GM12878 (cell line): ENCODE measurements at regions of chr6 and their contacts with region 1.

Region 1: GRCh38 chr6:16494793-16495192 is 256.4 kb downstream of the GMPR start:
- DNase-seq: peak; percentile 90
- ATAC-seq: peak; percentile 75
- H3K4me3 ChIP-seq: peak overlapping the region; percentile 3; the same call in 1 of the 2 replicates
- H3K27ac ChIP-seq: peak overlapping the region; percentile 85
- H3K4me1 ChIP-seq: peaks cover 60% of the 10 kb centered on the region
- H3K27me3 ChIP-seq: no peaks in the 10 kb centered on the region
- CTCF ChIP-seq: no peak
- EP300 ChIP-seq: peak in 1 of 2 experiments; percentile 87; a peak in 3 of 4 replicates
- POLR2A ChIP-seq: no peak
- RAD21 ChIP-seq: no peak

Region 2: GRCh38 chr6:16481697-16482399 is 12.9 kb before region 1 on chr6:
- CTCF ChIA-PET with region 1: interaction called, 155 read pairs
- POLR2A ChIA-PET with region 1: interaction called, 256 read pairs
- RAD21 ChIA-PET with region 1: interaction called, 66 read pairs
- SMC1A ChIA-PET with region 1: interaction called, 388 read pairs
- in situ Hi-C with region 1: no loop called
- intact Hi-C with region 1: loop called (anchors 1 kb)
- DNase-seq: no peak
- ATAC-seq: peak; percentile 61
- H3K4me3 ChIP-seq: peak overlapping the region; percentile 20; the same call in 1 of the 2 replicates
- H3K27ac ChIP-seq: peak overlapping the region; percentile 83
- H3K4me1 ChIP-seq: peaks cover 65% of the 10 kb centered on the region
- H3K27me3 ChIP-seq: no peaks in the 10 kb centered on the region
- CTCF ChIP-seq: no peak
- EP300 ChIP-seq: peak; percentile 68 to 77; a peak in 3 of 4 replicates
- POLR2A ChIP-seq: no peak
- RAD21 ChIP-seq: peak; percentile 3; the same call in 1 of the 2 replicates

Region 3: DNA sequence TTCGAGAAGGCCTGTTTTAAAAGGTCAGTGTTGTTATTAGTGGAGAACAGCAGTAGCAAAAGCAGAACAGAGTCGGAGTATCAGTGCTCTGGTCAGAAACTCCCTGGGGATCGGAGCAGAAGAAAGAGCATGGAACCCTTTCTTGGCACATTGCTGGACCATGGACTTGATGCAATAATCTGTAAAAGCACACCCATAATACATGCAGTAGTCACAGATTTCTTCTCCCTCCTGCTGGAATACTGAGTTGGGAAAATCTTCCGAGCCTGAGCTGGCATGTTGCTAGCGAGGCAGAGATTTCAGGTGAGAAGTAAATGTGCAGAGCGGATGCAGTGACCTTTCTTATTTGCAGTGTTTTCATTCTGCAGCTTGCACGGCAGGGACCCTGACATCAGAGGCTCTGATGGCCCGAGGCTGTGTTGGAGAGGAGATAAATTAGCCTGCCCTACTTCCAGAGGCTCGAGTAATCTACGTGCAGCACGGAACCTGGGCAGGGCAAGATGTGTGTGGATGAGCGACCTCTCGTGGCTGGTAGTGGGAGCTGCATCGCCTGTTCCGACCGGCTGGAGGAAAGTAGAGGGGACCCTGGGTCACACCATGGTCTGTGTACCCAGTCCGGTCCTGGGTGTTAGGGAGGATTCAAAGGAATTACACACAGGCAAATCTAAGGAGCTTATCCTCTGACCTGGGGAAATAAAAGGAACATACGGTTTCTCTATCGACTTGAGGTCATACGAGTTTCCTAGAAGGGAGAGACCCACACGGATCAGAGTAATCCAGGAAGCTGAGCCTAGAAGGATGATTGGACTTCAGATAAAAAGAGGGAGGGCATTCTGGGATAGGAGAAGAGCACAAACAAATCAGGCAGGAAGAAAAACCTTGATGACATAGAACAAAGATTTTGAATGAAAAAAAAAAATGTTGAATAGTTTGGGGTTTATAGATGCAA is 470.0 kb after region 1 on chr6:
- CTCF ChIA-PET with region 1: no interaction called
- POLR2A ChIA-PET with region 1: no interaction called
- RAD21 ChIA-PET with region 1: no interaction called
- SMC1A ChIA-PET with region 1: no interaction called
- in situ Hi-C with region 1: no loop called
- intact Hi-C with region 1: loop called (anchors 10 kb)
- DNase-seq: peak; percentile 12
- ATAC-seq: peak; percentile 99
- H3K4me3 ChIP-seq: no peak overlapping the region
- H3K27ac ChIP-seq: no peak overlapping the region
- H3K4me1 ChIP-seq: no peaks in the 10 kb centered on the region
- H3K27me3 ChIP-seq: no peaks in the 10 kb centered on the region; a peak in 1 of 4 replicates
- CTCF ChIP-seq: peak; percentile 81 to 95 (median 92)
- EP300 ChIP-seq: no peak
- POLR2A ChIP-seq: no peak
- RAD21 ChIP-seq: peak; percentile 85

Region 4: GRCh38 chr6:17057322-17057721 is 562.5 kb after region 1 on chr6:
- CTCF ChIA-PET with region 1: no interaction called
- POLR2A ChIA-PET with region 1: no interaction called
- RAD21 ChIA-PET with region 1: no interaction called
- SMC1A ChIA-PET with region 1: no interaction called
- in situ Hi-C with region 1: no loop called
- intact Hi-C with region 1: no loop called
- DNase-seq: no peak
- ATAC-seq: no peak
- H3K4me3 ChIP-seq: no peak overlapping the region
- H3K27ac ChIP-seq: no peak overlapping the region
- H3K4me1 ChIP-seq: no peaks in the 10 kb centered on the region
- H3K27me3 ChIP-seq: no peaks in the 10 kb centered on the region
- CTCF ChIP-seq: no peak
- EP300 ChIP-seq: no peak
- POLR2A ChIP-seq: no peak
- RAD21 ChIP-seq: no peak